A549 (cell line): ENCODE measurements at regions of chr5 and their contacts with region 1.

Region 1: GRCh38 chr5:42889311-42889933 is 77.7 kb upstream of the SELENOP start:
- DNase-seq: peak; percentile 62 to 79
- ATAC-seq: peak; percentile 95 to 98
- H3K4me3 ChIP-seq: no peak overlapping the region
- H3K27ac ChIP-seq: no peak overlapping the region
- H3K4me1 ChIP-seq: no peaks in the 10 kb centered on the region
- CTCF ChIP-seq: peak; percentile 87
- EP300 ChIP-seq: no peak
- POLR2A ChIP-seq: no peak
- RAD21 ChIP-seq: peak; percentile 82 to 95

Region 2: GRCh38 chr5:41856644-41857491 is 1032.6 kb before region 1 on chr5:
- CTCF ChIA-PET with region 1: interaction called, 32 read pairs
- POLR2A ChIA-PET with region 1: no interaction called
- DNase-seq: peak; percentile 42 to 69
- ATAC-seq: peak; percentile 86 to 97
- H3K4me3 ChIP-seq: no peak overlapping the region
- H3K27ac ChIP-seq: no peak overlapping the region
- H3K4me1 ChIP-seq: no peaks in the 10 kb centered on the region
- CTCF ChIP-seq: peak; percentile 86
- EP300 ChIP-seq: no peak
- POLR2A ChIP-seq: no peak
- RAD21 ChIP-seq: peak; percentile 86 to 92

Region 3: GRCh38 chr5:42876375-42876844 is 13.0 kb before region 1 on chr5:
- CTCF ChIA-PET with region 1: interaction called, 44 read pairs
- POLR2A ChIA-PET with region 1: no interaction called
- DNase-seq: no peak
- ATAC-seq: no peak
- H3K4me3 ChIP-seq: no peak overlapping the region
- H3K27ac ChIP-seq: no peak overlapping the region
- H3K4me1 ChIP-seq: no peaks in the 10 kb centered on the region
- CTCF ChIP-seq: no peak
- EP300 ChIP-seq: no peak
- POLR2A ChIP-seq: no peak
- RAD21 ChIP-seq: no peak

Region 4: DNA sequence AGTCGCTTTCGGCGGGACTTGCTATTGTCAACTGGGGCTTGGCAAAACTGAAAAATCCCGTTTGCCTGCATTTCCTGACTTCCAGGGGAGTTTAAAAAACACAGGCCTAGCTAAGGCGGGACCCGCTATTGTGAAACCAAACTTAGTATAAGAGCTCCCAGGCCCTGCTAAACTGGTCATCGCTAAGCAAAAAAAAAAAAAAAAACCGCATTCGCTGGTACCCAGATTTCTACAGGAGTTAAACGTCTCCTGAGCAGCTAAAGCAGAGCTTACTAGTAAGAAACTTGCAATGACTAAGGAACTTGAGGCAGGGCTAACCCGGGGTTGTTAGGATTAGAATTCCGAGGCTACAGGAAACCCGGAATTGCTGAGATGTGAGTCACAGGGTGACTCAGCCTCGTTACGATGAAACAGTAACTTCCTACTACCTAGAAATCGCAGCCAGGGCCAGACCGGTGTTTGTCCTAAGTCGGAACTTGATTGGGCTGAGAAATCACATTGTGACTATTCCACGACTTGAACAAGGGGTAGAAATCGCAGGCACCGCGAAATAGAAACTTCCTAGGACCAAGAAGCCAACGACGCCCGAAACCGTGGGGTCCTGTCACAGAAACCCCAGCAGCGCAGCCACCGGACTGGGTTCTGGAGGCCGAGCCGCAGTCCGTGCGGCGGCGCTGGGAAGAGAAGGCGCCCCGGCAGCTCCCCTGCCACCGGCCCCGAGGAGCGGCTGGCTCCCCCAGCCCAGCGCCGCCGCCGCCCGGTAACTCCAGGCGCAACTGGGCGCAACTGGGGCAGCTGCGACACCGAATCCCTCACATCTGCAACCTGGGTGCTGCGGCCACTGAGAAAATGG is 61.2 kb after region 1 on chr5:
- CTCF ChIA-PET with region 1: no interaction called
- POLR2A ChIA-PET with region 1: no interaction called
- DNase-seq: peak; percentile 97 to 99
- ATAC-seq: peak; percentile 93 to 94
- H3K4me3 ChIP-seq: peak overlapping the region; percentile 37
- H3K27ac ChIP-seq: peak overlapping the region; percentile 95 to 99
- H3K4me1 ChIP-seq: peaks cover 19% of the 10 kb centered on the region
- CTCF ChIP-seq: no peak
- EP300 ChIP-seq: peak; percentile 51 to 63; a peak in 2 of 5 replicates
- POLR2A ChIP-seq: no peak
- RAD21 ChIP-seq: 0 out of 5 replicates have a peak, but pooled peaks of 1 of the 2 experiments have one; percentile 27

Region 5: DNA sequence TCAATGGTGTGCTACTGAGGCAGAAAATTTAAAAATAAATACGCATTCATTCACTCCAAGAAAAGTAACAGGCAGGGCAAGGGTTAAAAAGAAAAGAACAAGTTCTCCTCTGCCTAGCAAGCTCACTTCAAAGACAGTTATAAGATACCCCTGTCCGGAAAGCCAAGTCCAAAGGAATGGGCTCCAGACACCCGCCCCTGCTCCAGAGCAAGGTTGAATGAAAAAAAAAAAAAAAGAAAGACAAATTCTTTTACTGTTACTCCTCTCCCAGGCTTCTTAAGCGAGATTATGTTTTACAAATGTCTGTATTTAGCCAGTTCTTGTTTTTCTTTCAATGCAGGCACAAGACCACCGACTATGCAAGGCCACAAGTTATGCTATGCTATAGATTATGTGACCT is 159.8 kb after region 1 on chr5:
- CTCF ChIA-PET with region 1: no interaction called
- POLR2A ChIA-PET with region 1: no interaction called
- DNase-seq: no peak
- ATAC-seq: no peak
- H3K4me3 ChIP-seq: no peak overlapping the region
- H3K27ac ChIP-seq: no peak overlapping the region
- H3K4me1 ChIP-seq: 0 out of 3 replicates have a peak, but pooled peaks cover 3% of the 10 kb centered on the region
- CTCF ChIP-seq: no peak
- EP300 ChIP-seq: no peak
- POLR2A ChIP-seq: no peak
- RAD21 ChIP-seq: no peak